HEK293T (cell line): ENCODE measurements at regions of chr12 and their contacts with region 1.

Region 1: DNA sequence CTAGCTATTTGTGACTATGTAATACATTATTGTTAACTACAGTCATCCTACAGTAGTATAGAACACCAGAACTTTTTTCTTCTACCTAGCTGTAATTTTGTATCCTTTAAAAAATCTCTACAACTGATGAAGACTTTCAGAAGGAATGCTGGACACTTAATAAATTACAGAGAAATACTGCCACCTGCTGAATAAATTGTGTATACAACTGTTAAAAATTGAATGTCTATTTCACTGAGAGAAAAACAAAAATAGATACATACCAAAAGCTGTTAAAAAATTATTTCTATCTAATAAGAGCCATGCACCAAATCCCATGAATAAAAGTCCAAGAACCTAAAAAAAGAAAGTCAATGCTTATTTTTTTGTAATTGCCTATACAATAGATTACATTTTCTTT is 6.6 kb downstream of the TSPAN19 start:
- DNase-seq: peak; percentile 10

Region 2: DNA sequence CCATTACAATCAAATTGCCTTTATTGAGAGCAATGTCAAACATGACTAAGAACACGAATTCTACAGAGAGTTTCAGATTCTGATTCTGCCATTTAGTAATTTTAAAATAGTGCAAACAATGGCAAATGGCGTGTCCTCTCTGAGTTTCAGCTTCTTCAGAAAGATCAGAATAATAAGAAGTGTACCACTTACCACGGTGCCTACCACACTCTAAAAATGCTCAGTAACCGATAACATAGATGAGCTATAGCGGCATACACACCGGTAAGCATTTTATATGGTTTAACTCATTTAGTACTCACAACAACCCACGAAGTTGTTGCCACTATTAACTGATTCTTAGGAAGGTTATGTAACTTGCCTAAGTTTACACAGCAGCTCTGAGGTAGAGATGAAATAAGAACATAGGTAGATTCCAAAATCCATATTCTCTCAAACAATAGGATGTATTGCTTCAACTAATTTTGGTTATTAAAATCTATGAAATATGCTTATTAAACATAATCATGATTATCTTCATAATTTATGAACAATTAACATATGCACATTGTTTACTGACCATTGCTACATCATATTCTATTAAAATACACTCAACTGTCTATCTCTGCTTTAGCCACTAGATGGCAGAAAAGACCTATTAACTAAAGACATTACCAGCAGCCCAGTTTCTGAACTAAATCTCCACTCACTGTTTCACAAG is 155.2 kb before region 1 on chr12:
- CTCF ChIA-PET with region 1: interaction called, 22 read pairs
- POLR2A ChIA-PET with region 1: no interaction called
- DNase-seq: peak; percentile 32

Region 3: DNA sequence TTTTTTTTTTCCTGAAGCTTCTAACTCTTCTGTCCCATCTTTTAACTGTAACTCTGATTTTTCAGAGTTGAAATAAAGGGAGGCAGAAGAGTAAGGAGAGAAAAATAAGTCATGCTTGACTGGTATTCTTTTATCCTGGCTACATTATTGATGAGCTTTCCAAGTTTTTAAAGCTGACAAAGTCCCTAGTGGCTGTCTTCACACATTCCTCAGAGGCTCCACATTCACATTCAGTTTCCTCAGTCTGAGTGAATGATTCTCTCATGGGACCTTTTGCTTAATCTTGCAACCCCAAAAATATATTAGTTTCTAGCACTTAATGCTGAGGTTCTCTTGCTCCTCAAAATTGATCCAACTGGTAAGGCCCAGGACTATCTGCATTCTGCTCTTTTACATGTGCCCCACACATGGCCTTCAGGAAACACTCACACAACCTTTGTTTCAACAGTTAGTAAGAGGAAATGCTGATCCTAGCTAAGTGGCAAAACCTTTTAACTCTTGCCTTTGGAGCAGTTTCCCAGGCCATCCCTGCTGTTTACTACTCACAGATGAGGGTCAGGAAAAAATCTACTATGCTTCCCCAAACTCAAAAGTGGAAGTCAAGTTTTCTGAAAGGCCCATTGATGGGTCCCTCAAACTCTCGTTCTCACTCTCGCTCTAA is 55.2 kb before region 1 on chr12:
- CTCF ChIA-PET with region 1: no interaction called
- POLR2A ChIA-PET with region 1: no interaction called
- DNase-seq: no peak

Region 4: GRCh38 chr12:85016423-85016822 is 13.0 kb before region 1 on chr12:
- CTCF ChIA-PET with region 1: no interaction called
- POLR2A ChIA-PET with region 1: no interaction called
- DNase-seq: no peak

Region 5: GRCh38 chr12:85057370-85057963 is 28.0 kb after region 1 on chr12:
- CTCF ChIA-PET with region 1: no interaction called
- POLR2A ChIA-PET with region 1: no interaction called
- DNase-seq: peak; percentile 23